ENCODE measurements at regions of chr1 and their contacts with region 1.

Region 1: GRCh38 chr1:50930193-50930592 is 29.9 kb downstream of the FAF1 start:
- DNase-seq: no peak

Region 2: GRCh38 chr1:51044834-51045233 is 114.6 kb after region 1 on chr1:
- intact Hi-C with region 1: loop called (anchors 5 kb)
- DNase-seq: no peak

Region 3: DNA sequence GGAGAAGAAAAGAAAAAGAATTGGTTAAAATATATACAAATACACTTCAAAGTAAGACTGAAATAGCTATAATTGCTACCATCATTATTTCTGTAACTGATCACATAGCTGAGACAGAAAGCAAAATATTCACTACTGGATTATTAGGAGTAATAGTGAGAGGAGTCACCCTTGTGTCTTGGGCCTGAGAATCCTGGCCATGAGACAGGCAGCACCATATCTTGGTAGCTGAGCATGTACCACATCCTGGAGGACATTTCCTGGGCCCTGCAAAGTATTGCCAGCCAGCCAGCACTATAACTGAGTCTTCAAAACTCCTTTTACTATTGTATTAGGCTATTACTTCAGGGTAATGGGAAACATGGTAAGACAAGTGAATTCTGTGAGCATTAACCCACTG is 235.3 kb after region 1 on chr1:
- intact Hi-C with region 1: no loop called
- DNase-seq: no peak

Region 4: GRCh38 chr1:51192213-51192843 is 262.1 kb after region 1 on chr1:
- intact Hi-C with region 1: loop called (anchors 10 kb)
- DNase-seq: no peak

Region 5: GRCh38 chr1:51906306-51907078 is 976.3 kb after region 1 on chr1:
- intact Hi-C with region 1: no loop called
- DNase-seq: no peak